ENCODE measurements at regions of chr1 and their contacts with region 1.

Region 1: DNA sequence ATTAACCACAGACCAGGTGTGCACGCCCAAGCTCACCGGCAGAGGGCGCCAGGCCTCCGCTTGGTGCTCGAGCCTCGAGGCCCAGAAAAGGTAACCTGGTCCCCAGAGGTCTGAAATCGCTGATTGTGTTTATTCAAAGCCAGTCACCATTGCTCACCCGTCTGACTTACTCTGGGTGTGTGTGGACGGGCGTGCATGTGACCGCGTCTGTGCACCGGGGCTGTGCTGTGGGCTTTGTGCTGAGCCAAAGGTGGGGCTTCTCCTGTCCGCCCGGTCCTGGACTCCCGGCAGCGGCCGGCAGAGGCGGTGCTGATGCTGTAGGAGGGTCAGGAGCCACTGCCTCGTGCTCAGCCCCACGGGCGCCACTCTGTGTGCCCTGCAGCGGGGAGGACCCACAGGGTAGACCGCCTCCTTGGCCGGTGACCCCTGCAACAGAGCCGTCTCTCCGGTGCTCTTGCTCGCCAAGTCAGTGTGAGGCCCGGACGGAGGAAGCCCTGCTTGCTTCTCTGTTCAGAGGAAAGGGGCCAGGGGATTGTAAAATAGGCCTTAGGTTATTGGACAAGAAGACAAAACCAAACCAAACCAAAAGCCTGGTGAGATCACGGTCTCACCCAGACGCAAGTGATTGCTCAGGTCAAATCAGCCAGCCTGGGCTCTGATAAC is 32.0 kb upstream of the BTG2 start:
- DNase-seq: peak; percentile 71
- CTCF ChIP-seq: peak; percentile 95

Region 2: DNA sequence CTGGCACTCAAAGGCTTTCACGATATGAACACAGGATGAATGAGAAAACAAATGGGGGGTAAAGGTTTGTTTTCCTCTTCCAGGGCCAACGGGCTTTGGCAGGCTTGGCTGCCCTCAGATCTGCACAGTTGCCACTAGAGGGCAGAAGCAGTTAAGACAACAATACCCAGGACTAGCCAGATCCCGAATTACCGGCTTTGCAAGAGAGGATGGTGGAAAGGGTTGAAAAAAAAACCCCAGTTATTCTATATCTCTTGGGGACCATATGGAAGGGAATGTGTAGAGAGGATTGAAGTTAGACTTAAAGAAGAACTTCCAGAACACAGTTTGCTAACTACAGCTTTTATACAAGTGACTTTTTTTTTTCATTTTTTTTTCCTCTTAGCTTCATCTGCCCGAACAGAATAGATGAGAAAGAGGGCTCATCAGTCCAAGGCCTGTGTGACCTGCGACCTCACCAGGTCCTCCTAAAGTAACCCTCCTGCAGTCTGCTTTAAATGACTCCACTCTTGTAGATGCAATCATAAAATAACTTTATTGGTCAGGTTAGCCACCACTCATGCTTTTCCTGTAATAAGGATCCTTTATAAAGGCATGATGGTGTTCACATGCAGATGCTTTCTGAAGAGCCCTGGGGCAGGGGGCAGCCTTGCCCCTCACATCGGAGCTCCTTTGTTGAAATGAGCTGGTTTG is 66.9 kb after region 1 on chr1:
- in situ Hi-C with region 1: loop called (anchors 5 kb)
- DNase-seq: peak; percentile 89
- CTCF ChIP-seq: peak; percentile 93

Region 3: DNA sequence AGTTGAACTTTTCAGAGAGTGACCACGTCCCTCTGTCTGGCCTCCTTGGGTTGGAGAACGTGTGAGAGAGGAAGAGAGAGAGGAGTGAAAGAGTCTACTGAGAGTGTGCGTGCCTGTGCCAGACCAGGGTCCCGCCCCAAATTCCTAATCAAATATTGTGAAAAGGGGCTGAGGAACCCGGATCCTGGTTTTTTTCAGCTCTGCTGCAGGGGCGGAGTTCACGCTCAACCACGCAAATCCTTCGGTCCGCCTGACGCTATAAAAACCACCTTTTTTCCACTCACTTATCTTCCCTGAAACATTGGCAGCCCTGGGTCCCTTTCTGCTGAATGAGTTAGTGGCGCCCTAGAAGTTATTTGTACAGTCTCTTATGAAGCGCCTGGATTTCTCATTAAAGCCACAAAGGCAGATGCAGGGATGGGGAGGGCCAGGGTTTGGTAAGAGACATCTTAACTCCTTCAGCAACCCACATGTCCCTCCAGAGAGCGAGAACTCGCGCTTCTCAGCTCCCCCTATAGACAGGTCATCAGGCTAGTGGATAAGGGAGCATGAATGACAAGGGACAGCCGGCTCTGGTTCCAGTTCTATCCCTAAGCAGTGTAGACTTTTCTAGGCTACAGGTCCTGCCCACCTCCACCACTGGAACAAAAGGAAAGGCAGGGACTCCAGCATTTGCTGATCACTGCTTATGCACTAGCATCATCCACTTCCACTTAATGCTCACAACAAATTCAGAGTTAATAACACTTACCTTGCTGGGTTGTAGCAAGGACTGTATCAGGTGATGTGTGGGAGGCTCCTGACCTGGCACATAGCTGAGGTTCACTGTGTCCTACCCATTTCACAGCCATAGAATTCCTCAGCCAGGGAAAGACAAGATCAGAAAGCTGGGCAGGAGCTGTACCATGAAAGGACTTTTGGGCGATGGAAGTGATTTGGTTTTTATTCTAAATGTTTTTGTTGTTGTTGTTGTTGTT is 78.0 kb after region 1 on chr1 and contains the start of gene FMOD:
- in situ Hi-C with region 1: no loop called
- DNase-seq: no peak
- CTCF ChIP-seq: no peak

Region 4: DNA sequence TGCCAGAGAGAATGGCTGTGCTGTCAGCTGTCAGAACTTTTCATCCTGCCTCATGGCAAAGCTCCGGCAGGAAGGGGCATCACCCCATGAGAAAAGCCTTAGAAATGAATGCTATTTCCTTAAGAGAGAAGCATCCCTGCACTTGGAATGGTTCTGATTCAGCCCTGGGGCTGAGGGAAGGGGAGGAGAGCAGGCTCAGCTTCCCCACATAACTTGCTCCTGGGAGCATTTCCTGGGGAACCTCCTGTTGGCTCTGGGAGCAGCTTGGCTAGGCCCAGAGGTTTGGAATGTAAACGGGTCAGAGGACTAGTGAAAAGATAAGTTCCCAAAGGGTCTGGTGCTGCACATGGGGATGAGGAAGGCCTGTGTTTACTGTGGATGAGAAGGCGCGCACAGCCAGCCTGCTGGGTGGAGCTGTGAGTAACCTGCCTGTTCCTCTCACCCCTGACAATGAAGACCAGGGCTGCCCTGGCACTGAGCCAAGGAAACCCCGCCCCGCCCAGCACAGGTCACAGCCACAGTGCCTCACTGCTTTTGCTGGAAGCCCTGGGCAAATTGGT is 207.3 kb after region 1 on chr1:
- in situ Hi-C with region 1: loop called (anchors 10 kb)
- DNase-seq: no peak
- CTCF ChIP-seq: no peak

Region 5: DNA sequence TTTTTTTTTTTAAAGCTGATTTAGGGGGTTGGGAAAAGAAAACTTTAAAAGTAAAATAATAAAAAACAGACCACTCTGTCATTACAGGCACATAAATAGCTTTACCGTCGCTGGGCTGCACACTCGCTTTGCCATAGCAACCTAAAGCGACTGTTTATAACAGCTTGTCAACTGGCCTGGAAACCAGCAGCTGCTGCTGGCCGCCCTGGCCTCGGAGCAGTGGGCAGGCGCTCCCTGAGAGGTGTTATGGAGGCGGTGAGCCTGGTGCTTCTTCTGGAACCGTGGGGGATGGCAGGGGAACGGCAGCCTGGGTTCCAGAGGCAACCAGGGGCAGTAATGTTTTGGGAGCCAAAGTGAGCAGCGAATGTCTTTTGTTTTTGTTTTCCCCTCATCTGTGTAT is 399.0 kb after region 1 on chr1:
- in situ Hi-C with region 1: no loop called
- DNase-seq: no peak
- CTCF ChIP-seq: no peak

Region 6: GRCh38 chr1:203702130-203702577 is 428.8 kb after region 1 on chr1:
- in situ Hi-C with region 1: loop called (anchors 25 kb)
- DNase-seq: peak; percentile 49
- CTCF ChIP-seq: peak; percentile 82